ENCODE measurements at regions of chr10 and their contacts with region 1.

Region 1: DNA sequence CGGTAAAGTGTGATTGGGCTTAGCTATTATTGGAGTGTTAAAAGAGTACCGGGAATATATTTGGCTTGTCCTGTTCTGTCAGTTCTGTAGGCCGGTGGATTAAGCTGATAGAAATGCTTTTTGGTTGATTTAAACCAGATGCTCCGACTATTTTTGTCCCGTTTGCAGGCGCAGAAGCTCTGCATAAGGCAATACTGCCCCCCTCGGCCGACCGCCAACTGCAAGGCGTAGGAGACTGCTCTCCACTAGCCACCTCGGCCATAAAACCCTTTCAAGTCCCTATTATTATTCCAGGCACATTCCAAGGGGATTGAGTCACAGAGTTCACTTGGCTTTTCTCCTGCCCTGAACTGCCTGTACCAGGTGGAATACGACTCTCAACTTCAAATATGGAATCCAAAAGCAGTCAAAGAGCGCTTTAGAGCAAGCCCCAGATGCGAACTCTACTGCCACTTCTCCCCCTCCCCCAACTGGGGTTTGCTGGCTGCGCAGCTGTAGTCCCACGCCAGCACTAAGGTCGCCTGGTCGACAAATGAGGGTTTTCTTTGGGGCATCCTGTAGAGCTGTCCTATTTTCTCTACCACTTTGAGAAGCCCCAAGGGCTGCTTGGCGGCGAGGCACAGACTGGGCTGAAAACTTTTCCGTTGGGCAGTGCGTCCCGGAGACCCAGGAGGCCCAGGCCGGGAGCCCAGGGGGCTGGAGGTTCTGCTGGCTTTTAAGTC is 108.3 kb downstream of the REEP3 start:
- DNase-seq: peak; percentile 100
- ATAC-seq: peak; percentile 55
- H3K4me3 ChIP-seq: peak overlapping the region; percentile 73
- H3K27ac ChIP-seq: peak overlapping the region; percentile 95
- H3K4me1 ChIP-seq: peaks cover 52% of the 10 kb centered on the region
- H3K27me3 ChIP-seq: no peaks in the 10 kb centered on the region
- CTCF ChIP-seq: peak; percentile 98

Region 2: DNA sequence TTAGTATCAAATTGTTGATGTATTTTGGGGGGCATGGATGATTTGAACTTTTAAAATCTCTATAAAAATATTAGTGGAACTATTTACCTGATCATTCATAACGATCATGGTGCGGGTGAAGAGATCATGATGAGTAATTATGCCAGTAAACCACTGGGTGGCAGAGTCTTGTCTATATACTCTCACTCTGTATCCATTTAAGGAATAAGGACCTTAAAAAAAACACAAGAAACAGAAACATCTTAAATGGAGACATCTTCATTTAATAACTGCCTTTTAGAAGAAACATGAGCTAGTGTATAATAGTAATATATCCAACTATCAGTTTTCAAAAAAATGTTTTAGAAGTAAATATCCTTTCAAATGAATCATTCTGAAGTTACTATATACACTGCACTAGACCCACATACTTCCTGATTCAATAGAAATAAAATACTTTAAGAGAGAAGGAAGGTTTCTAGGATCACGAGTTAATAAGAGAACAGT is 412.4 kb before region 1 on chr10:
- CTCF ChIA-PET with region 1: interaction called, 4 read pairs
- POLR2A ChIA-PET with region 1: no interaction called
- intact Hi-C with region 1: loop called (anchors 1 kb)
- DNase-seq: peak; percentile 92
- ATAC-seq: peak; percentile 85
- H3K4me3 ChIP-seq: no peak overlapping the region
- H3K27ac ChIP-seq: no peak overlapping the region; the same call in 1 of the 2 replicates
- H3K4me1 ChIP-seq: peaks cover 5% of the 10 kb centered on the region
- H3K27me3 ChIP-seq: no peaks in the 10 kb centered on the region
- CTCF ChIP-seq: peak; percentile 100

Region 3: GRCh38 chr10:63297941-63298340 is 331.6 kb before region 1 on chr10:
- CTCF ChIA-PET with region 1: no interaction called
- POLR2A ChIA-PET with region 1: interaction called, 11 read pairs
- intact Hi-C with region 1: no loop called
- DNase-seq: no peak
- ATAC-seq: no peak
- H3K4me3 ChIP-seq: no peak overlapping the region
- H3K27ac ChIP-seq: no peak overlapping the region
- H3K4me1 ChIP-seq: peaks cover 3% of the 10 kb centered on the region; the same call in 1 of the 2 replicates
- H3K27me3 ChIP-seq: no peaks in the 10 kb centered on the region
- CTCF ChIP-seq: no peak

Region 4: DNA sequence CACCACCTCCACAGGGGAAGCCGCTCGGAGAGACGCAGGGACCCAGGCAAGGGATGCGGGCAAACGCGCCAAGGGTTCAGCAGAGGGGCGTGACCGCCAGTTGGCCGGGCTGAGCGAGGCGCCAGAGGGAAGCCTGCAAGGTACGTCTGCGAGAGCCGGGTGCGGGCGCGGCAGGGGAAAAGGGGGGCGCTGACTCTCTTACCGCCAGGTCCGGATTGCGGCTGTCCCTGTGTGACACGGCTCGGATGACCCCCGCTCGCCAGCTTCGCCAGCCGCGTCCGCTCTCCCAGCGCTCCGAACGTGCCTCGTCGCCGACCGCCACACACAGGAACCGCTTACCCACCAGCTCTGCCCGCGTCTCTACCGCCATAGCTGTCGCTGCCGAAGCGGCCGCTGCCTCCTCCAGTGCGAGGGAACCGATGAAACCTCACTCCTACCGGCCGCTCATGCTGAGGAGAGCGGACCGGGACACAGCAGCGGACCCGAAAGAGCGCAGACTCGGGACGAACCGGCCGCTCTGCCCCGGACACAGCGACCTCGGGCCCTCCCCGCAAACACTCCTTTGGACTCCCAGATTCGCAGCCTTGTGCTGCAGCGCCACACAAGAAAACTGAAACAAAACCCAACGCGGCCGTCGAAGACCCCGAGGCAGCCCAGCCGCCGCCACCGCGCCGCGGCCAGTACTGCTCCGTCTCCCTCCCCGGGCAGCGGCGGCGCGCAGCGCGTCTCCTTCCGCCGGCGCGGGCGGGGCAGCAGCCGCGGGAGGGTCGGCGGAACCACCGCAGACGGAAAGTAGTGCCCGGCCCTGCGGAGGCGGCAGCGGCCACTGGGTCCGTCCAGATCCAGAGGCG is 164.0 kb before region 1 on chr10 and contains the start of gene JMJD1C:
- CTCF ChIA-PET with region 1: no interaction called
- POLR2A ChIA-PET with region 1: interaction called, 8 read pairs
- intact Hi-C with region 1: loop called (anchors 1 kb)
- DNase-seq: peak; percentile 97
- ATAC-seq: peak; percentile 67
- H3K4me3 ChIP-seq: peak within 1 kb of the TSS; percentile 83
- H3K27ac ChIP-seq: peak within 1 kb of the TSS; percentile 69
- H3K4me1 ChIP-seq: peaks cover 26% of the 10 kb centered on the region
- H3K27me3 ChIP-seq: no peaks in the 10 kb centered on the region
- CTCF ChIP-seq: peak; percentile 34
- total RNA-seq, gene JMJD1C: 121 and 139 TPM in 2 replicates

Region 5: DNA sequence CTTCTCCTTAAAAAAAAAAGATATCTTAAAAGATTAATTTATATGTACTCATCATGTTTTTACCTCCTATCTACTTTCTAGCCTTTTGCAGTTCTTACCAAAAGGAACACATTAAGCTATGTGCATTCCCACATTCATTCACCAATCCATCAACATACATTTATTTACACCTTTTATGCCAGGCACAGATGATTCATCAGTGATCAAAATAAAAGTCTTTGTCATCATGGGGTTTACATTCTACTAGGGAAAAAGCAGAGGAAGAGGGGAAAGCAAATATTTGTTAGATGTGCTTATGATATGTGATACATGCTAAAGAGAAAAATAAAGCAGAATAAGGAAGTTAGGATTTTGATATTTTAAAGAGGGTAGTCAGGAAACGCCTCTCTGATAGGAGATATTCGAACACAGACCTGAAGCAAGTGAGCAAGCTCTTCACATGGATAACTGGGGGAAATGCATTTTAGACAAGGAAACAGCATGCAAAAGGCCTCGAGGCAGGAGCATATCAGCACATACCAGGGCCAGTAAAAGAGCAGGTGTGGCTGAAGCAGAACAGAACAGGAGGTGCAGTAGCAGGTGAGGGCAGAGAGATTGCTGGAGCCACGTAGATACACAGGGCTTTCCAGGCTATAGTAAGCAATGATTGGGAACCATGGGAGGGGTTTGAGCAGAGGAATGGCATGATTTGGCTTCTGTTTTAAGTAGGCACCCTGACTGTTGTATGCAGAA is 40.9 kb before region 1 on chr10:
- CTCF ChIA-PET with region 1: no interaction called
- POLR2A ChIA-PET with region 1: interaction called, 3 read pairs
- intact Hi-C with region 1: loop called (anchors 1 kb)
- DNase-seq: peak; percentile 93
- ATAC-seq: peak; percentile 79
- H3K4me3 ChIP-seq: peak overlapping the region; percentile 2; the same call in 1 of the 2 replicates
- H3K27ac ChIP-seq: peak overlapping the region; percentile 44
- H3K4me1 ChIP-seq: peaks cover 31% of the 10 kb centered on the region
- H3K27me3 ChIP-seq: no peaks in the 10 kb centered on the region
- CTCF ChIP-seq: no peak

Region 6: GRCh38 chr10:63707254-63707910 is 77.9 kb after region 1 on chr10:
- CTCF ChIA-PET with region 1: interaction called, 10 read pairs
- POLR2A ChIA-PET with region 1: interaction called, 12 read pairs
- intact Hi-C with region 1: loop called (anchors 1 kb)
- DNase-seq: peak; percentile 100
- ATAC-seq: peak; percentile 70
- H3K4me3 ChIP-seq: no peak overlapping the region
- H3K27ac ChIP-seq: peak overlapping the region; percentile 76
- H3K4me1 ChIP-seq: peaks cover 62% of the 10 kb centered on the region
- H3K27me3 ChIP-seq: no peaks in the 10 kb centered on the region
- CTCF ChIP-seq: no peak